ENCODE measurements at regions of chr3 and their contacts with region 1.

Region 1: DNA sequence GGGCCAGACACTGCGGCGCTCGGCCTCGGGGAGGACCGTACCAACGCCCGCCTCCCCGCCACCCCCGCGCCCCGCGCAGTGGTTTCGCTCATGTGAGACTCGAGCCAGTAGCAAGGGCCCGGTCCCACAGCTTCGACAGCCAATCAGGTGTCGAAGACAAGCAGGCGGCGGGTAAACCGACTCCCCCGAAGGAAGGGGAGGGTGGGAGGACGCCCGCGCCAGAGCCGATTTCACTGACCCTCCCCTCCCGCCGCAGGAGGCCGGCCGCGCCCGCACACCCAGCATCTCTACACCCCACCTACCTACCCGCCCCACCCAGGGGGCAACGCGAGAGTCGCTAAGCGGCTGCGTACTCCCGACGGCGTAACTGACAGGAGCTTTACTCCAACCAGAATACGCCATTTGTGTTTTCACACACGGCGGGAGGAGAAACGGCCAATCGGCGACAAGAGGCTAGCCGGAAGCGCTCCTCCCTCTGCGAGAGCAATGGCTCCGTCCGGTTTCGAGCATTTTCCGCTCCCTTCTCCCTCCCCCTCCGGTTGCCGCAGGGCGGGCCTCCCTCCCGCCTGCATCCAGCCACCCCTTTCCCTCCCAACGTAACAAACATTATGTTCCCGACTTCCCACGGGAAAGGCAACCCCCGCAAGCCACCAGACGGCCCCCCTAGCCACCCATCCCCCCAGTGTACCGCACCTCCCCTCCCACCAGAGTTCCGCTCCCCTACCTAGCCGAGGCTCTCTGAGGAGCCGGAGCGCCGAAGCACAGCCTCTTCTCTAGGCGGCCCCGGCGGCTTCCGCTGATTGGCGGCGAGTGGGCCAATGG is 504 bp upstream of the SETD5 start:
- H3K4me3 ChIP-seq: peak overlapping the region; percentile 63
- H3K27ac ChIP-seq: peak overlapping the region; percentile 99
- H3K4me1 ChIP-seq: peaks cover 26% of the 10 kb centered on the region
- CTCF ChIP-seq: no peak

Region 2: GRCh38 chr3:9362731-9363530 is 34.0 kb before region 1 on chr3 and contains the start of gene THUMPD3:
- CTCF ChIA-PET with region 1: interaction called, 3 read pairs
- POLR2A ChIA-PET with region 1: interaction called, 70 read pairs
- H3K4me3 ChIP-seq: peak within 1 kb of the TSS; percentile 77
- H3K27ac ChIP-seq: peak within 1 kb of the TSS; percentile 93
- H3K4me1 ChIP-seq: peaks cover 3% of the 10 kb centered on the region; the same call in 1 of the 2 replicates
- CTCF ChIP-seq: no peak; the same call in 1 of the 2 replicates

Region 3: DNA sequence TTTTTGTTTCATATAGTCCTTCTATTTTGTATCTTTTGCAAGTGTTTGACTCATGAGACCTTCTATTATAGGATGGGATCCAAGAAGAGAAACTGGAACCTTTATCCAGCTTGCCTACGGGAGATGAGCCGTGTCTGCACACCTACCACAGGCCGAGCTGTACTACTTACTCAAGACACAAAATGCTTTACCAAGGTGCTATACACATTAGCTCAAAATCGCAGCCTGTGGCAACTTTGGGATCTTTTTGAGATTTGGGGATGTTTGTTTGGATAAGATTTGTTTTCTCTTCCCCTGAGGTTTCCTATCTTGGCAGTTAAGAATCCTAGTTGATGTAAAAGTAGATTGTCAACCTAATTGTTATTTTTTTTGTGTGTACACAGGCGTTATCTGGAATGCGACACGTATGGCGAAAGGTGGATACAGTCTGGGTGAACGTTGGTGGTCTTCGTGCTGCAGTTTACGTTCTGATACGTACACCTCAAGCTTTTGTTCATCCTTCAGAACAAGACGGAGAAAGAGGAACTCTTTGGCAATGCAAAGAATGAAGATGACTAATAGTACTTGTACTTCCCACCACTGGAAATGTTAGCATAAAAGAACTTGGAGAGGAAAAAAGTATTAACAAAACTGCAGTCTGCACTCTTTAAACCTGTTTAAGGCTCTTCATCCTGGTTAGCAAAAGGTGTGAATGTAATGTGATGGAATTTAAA is 12.6 kb before region 1 on chr3:
- CTCF ChIA-PET with region 1: no interaction called
- POLR2A ChIA-PET with region 1: interaction called, 16 read pairs
- H3K4me3 ChIP-seq: no peak overlapping the region
- H3K27ac ChIP-seq: 0 out of 2 replicates have a peak overlapping the region, but pooled peaks have one; percentile 8
- H3K4me1 ChIP-seq: no peaks in the 10 kb centered on the region
- CTCF ChIP-seq: no peak

Region 4: DNA sequence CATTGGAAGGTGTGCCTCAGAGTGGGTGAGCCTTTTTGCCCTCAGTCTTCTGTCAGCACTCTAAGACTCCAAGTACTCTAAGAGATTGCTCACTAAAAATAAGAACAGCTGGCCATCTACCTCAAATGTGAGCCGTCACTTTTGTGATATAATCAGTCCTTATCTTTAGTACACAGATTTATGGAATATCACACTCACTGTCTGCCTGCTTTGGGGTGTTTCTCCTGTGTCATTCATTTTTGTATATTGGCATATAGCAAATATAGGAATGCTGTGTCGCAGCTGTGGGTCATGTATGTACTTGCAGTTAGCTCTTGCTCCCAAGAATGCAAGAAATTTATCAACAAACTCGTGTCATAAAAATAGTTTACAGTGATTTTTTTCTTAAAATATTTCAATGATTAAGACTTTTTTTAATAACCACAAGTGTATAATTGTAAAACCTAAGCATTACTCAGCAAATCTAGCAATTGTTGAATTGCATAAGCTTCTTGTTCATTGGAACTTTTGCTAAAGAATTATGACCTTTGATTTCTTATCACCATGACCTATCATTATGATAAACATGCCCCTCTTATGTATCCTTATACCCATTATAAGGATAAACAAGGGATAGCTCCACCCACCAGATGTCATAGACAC is 19.3 kb after region 1 on chr3:
- CTCF ChIA-PET with region 1: interaction called, 6 read pairs
- POLR2A ChIA-PET with region 1: interaction called, 62 read pairs
- H3K4me3 ChIP-seq: no peak overlapping the region
- H3K27ac ChIP-seq: no peak overlapping the region
- H3K4me1 ChIP-seq: peaks cover 20% of the 10 kb centered on the region
- CTCF ChIP-seq: no peak

Region 5: DNA sequence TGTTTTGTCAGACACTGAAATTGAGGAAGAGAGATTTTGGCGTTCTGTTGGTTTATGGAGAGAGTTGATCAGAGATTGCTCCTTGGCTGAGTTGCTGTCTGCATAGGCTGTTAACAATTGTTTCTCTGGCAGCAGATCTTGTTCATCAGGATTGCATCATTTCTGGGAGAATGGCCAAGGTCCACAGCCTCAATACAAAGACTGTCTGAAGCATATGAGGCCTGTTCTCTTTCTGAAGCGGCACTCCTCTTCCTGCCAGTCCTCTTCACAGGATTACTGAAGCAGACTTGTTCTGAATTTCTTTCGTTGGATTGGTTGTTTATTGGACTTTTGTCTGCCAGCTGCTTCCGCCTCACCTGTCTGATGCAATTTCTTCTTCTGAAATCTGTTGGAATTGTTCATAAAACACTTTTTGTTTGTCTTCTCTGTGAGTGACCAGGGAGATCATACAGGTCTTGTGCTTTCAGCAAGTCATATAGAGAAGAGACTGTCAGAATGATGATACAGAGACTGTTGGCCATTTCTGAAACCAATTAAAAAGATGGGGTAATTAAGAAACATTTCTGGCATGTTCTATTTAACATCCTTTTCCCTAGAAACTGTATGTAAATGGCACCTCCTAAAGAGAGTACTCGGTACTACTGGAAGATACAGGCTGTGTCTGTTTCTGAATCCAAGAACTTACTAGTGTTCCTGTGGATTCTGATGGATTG is 26.0 kb after region 1 on chr3:
- CTCF ChIA-PET with region 1: interaction called, 15 read pairs
- POLR2A ChIA-PET with region 1: interaction called, 62 read pairs
- H3K4me3 ChIP-seq: no peak overlapping the region
- H3K27ac ChIP-seq: peak overlapping the region; percentile 82
- H3K4me1 ChIP-seq: peaks cover 20% of the 10 kb centered on the region
- CTCF ChIP-seq: no peak

Region 6: GRCh38 chr3:9439331-9439730 is 42.4 kb after region 1 on chr3:
- CTCF ChIA-PET with region 1: interaction called, 4 read pairs
- POLR2A ChIA-PET with region 1: interaction called, 16 read pairs
- H3K4me3 ChIP-seq: no peak overlapping the region
- H3K27ac ChIP-seq: no peak overlapping the region
- H3K4me1 ChIP-seq: peaks cover 11% of the 10 kb centered on the region
- CTCF ChIP-seq: no peak

Region 7: GRCh38 chr3:9681723-9682081 is 284.8 kb after region 1 on chr3:
- CTCF ChIA-PET with region 1: no interaction called
- POLR2A ChIA-PET with region 1: no interaction called
- H3K4me3 ChIP-seq: no peak overlapping the region
- H3K27ac ChIP-seq: no peak overlapping the region
- H3K4me1 ChIP-seq: no peaks in the 10 kb centered on the region
- CTCF ChIP-seq: no peak